ENCODE measurements at regions of chr15 and their contacts with region 1.

Region 1: GRCh38 chr15:60362321-60363086 is 35.3 kb downstream of the ANXA2 start:
- H3K4me3 ChIP-seq: no peak overlapping the region
- H3K27ac ChIP-seq: no peak overlapping the region
- H3K4me1 ChIP-seq: no peaks in the 10 kb centered on the region
- CTCF ChIP-seq: no peak

Region 2: GRCh38 chr15:60259469-60259868 is 103.0 kb before region 1 on chr15:
- CTCF ChIA-PET with region 1: no interaction called
- POLR2A ChIA-PET with region 1: no interaction called
- H3K4me3 ChIP-seq: no peak overlapping the region
- H3K27ac ChIP-seq: no peak overlapping the region
- H3K4me1 ChIP-seq: no peaks in the 10 kb centered on the region
- CTCF ChIP-seq: no peak

Region 3: DNA sequence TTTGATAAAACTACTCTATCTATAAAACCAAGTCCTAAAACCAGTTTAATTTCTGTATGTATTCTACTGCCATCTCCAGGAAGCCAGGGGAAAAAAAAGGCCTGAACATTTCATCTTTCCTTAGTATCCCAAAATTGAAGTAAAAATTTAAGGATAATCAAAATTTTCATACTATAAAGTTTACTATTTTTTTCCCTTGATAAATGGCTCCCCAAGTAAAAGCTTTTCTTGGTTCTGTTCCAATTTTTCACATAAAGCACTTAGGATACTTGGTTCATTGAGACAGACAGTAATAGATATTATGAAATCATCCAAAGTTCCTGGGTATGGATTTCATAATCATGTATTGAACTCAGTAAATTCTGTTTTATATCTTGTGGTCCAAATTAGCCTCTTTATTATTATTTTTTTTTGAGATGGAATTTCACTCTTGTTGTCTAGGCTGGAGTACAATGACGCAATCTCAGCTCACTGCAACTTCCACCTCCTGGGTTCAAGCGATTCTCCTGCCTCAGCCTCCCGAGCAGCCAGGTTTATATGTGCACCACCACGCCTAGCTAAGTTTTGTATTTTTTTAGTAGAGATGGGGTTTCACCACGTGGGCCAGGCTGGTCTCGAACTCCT is 81.9 kb after region 1 on chr15:
- CTCF ChIA-PET with region 1: interaction called, 17 read pairs
- POLR2A ChIA-PET with region 1: no interaction called
- H3K4me3 ChIP-seq: no peak overlapping the region
- H3K27ac ChIP-seq: no peak overlapping the region
- H3K4me1 ChIP-seq: no peaks in the 10 kb centered on the region
- CTCF ChIP-seq: no peak

Region 4: GRCh38 chr15:60520825-60521368 is 158.4 kb after region 1 on chr15:
- CTCF ChIA-PET with region 1: interaction called, 37 read pairs
- POLR2A ChIA-PET with region 1: no interaction called
- H3K4me3 ChIP-seq: no peak overlapping the region
- H3K27ac ChIP-seq: no peak overlapping the region
- H3K4me1 ChIP-seq: peaks cover 3% of the 10 kb centered on the region; the same call in 1 of the 2 replicates
- CTCF ChIP-seq: peak; percentile 43; the same call in 1 of the 2 replicates

Region 5: DNA sequence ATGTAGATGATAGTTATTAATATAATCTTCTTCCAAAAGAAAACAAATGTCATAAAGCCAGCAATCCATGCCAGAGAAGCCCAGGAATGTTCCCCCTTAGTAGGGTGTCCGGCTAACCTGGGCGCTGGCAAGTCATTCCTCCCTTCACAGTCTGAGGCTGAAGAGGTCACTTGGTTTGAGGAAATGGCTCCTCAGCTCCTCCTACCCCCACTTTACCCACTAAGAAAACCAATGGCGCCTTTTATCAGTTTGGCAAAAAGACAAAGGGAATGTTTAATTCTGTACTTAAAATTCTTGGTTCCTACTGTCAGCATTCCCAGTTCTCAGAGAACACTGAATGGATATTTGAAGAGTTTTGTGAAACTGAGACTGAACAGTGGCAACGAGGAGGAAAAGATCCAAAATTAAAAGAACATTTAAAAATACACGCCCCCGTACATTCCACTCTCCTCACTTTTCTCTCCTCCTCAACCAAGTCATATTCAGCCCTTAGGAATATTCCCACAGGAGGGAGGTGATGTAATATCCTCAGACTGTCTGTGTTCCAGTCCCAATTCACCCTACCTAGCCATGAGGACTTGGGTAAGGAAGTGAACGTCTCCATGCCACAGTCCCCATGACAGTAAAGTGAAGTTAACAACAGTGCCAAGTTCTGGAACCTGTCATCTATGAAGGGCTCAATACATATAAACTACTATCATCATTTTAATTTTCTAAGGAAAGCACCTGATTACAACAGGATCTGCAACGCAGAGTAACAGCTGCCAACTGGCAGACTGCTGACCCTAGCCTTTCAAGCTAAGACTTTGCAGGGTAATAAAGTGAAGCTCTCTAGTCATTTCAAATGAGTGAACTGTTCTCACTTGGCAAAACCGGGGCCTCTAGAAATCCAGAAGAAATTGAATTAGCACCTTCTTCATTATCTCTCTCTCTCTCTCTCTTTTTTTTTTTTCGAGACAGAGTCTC is 350.9 kb after region 1 on chr15:
- CTCF ChIA-PET with region 1: no interaction called
- POLR2A ChIA-PET with region 1: no interaction called
- H3K4me3 ChIP-seq: no peak overlapping the region
- H3K27ac ChIP-seq: no peak overlapping the region
- H3K4me1 ChIP-seq: no peaks in the 10 kb centered on the region; the same call in 1 of the 2 replicates
- CTCF ChIP-seq: no peak

Measured in HEK293 (cell line).